Vagina (tissue), 2 donors: ENCODE measurements at regions of chr4 and their contacts with region 1.

Region 1: GRCh38 chr4:184733654-184734524 is at the start of gene CENPU:
- DNase-seq: peak in 1 of 2 donors; percentile 97
- H3K4me3 ChIP-seq: peak within 1 kb of the TSS; percentile 59 to 80
- H3K27ac ChIP-seq: peak within 1 kb of the TSS; percentile 67
- H3K4me1 ChIP-seq: peaks cover 20% of the 10 kb centered on the region
- H3K27me3 ChIP-seq: no peaks in the 10 kb centered on the region
- CTCF ChIP-seq: peak in 2 of 3 experiments; percentile 23 to 69
- POLR2A ChIP-seq: peak in 1 of 2 donors; percentile 92
- total RNA-seq, gene CENPU: 5.2 TPM

Region 2: DNA sequence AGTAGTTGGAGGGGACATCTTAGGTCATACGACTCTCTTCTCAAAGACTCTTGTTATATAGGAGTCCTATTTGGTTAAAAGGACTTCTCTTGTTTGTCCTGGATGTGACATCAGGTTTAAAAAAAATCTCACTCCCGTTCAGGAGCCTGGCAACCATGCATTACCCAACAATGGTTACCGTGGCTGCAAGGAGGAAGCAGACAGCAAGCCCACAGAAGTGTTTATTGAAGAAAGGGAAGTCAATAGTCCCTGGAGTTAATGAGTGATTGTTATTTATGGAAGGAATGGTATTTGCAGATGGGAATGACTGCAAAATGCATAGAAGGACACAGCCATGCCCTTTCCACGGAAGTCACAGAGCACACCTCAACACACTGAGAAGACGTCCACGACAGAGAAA is 440.3 kb before region 1 on chr4:
- intact Hi-C with region 1: no loop called
- DNase-seq: peak in 1 of 2 donors; percentile 29
- H3K4me3 ChIP-seq: no peak overlapping the region
- H3K27ac ChIP-seq: no peak overlapping the region
- H3K4me1 ChIP-seq: peaks cover 5% of the 10 kb centered on the region
- H3K27me3 ChIP-seq: no peaks in the 10 kb centered on the region
- CTCF ChIP-seq: no peak
- POLR2A ChIP-seq: no peak

Region 3: GRCh38 chr4:184649026-184649970 is 84.6 kb before region 1 on chr4 and contains the starts of genes CASP3 and PRIMPOL:
- intact Hi-C with region 1: loop called (anchors 10 kb)
- DNase-seq: peak in 1 of 2 donors; percentile 96
- H3K4me3 ChIP-seq: peak within 1 kb of the TSS; percentile 89 to 96
- H3K27ac ChIP-seq: peak within 1 kb of the TSS; percentile 96
- H3K4me1 ChIP-seq: peaks cover 45% of the 10 kb centered on the region
- H3K27me3 ChIP-seq: no peaks in the 10 kb centered on the region
- CTCF ChIP-seq: peak in 2 of 3 experiments; percentile 17 to 30
- POLR2A ChIP-seq: peak in 1 of 2 donors; percentile 91
- total RNA-seq, gene CASP3: 11.3 TPM
- total RNA-seq, gene PRIMPOL: 14.0 TPM

Region 4: DNA sequence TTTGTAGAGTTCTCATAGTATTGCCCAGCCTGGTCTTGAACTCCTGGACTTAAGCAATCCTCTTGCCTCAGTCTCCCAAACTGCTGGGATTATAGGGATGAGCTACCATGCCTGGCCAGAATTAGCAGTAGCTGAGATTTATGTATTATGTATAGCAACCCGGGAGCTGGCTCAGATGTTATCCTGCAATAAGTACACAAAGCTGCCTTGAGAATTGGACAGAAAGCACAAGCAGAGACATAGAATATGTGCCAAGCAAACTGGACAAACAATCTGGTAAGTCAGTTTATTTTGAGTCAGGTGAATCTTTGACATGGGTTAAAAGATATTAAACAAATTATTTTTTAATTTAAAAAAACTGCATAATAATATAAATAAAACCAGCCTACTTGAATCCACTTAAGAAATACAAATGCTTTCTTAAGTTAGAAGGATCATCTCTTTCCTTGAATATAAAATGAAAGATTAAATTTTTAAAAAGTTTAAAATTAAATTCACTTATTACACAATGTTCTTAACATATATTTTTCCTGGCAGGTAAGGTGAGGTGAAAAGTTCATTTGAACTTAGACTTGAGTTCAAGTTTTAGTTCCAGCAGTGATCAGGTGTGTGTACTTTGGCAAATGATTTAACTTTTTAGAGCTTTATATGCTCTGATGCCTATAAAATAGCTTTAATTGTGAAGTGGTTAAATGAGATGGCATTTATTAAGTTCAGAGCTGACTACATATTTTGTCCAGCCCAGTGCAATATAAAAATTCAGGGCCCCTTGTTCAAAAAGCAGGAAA is 179.7 kb after region 1 on chr4:
- intact Hi-C with region 1: no loop called
- DNase-seq: no peak
- H3K4me3 ChIP-seq: no peak overlapping the region
- H3K27ac ChIP-seq: no peak overlapping the region
- H3K4me1 ChIP-seq: no peaks in the 10 kb centered on the region
- H3K27me3 ChIP-seq: no peaks in the 10 kb centered on the region
- CTCF ChIP-seq: no peak
- POLR2A ChIP-seq: no peak

Region 5: GRCh38 chr4:185005216-185005819 is 271.4 kb after region 1 on chr4:
- intact Hi-C with region 1: no loop called
- DNase-seq: no peak
- H3K4me3 ChIP-seq: peak overlapping the region; percentile 15 to 35
- H3K27ac ChIP-seq: no peak overlapping the region
- H3K4me1 ChIP-seq: peaks cover 13% of the 10 kb centered on the region
- H3K27me3 ChIP-seq: no peaks in the 10 kb centered on the region
- CTCF ChIP-seq: peak; percentile 34 to 85 (median 73)
- POLR2A ChIP-seq: no peak